Posterior cingulate gyrus (tissue), 11 donors: ENCODE measurements at regions of chr6 and their contacts with region 1.

Region 1: GRCh38 chr6:122530440-122531046 is 58.9 kb upstream of the SERINC1 start:
- DNase-seq: peak in 2 of 10 donors; percentile 4 to 25

Region 2: DNA sequence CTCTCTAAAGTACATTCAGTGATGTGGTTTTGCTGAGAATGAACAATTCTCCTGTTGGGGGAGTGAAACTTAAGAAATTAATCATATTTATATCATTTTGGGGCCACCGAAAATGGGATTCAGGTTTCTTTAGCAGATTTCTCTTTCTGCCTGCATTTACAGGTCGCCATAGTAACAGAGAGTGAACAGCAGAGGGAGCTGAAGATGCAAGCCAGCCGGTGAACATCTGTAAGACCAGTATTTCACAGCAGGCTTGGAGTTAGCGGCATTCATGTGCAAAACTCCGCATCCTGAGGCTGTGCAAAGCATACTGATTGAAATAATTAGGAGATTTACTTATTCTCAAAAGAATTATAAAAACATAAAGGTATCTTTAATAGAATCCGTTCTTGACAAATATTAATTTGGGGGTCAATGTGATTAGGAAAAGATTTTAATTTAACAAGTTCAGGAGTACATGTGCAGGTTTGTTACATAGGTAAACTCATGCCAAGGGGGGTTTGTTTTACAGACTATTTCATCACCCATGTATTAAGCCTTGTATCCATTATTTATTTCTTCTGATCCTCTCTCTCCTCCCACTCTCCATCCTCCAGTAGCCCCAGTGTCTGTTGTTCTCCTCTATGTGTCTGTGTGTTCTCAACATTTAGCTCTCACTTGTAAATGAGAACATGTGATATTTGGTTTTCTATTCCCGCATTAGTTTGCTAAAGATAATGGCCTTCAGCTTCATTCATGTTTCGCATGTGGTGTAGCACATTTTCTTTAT is 148.9 kb before region 1 on chr6:
- intact Hi-C with region 1: loop called (anchors 1 kb)
- DNase-seq: peak in 8 of 10 donors; percentile 32 to 90 (median 58)

Region 3: GRCh38 chr6:122491919-122492555 is 38.5 kb before region 1 on chr6:
- intact Hi-C with region 1: loop called (anchors 5 kb)
- DNase-seq: peak; percentile 30 to 96 (median 76)